ENCODE measurements at regions of chr17 and their contacts with region 1.

Region 1: DNA sequence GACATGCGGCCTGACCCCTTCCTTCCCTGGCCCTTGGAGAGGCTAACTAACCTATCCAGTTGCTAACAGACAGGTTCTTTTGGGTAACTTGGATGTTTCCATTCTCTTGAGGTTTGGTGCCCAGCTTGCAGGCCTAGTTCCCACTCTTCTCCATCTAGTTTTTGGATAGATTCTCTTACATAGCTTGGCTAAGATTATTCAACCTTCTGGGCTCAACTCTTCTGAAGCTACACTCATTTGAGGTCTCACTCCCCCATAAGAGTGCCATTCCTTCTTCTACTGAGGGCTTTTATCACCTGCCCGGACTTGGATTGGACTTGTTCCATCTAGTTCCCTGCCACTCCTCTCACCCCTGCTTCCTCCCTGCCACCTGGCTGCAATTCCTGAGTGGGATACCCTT is 44.1 kb upstream of the MARCHF10 start:
- DNase-seq: no peak
- H3K4me3 Mint-ChIP-seq: no peak overlapping the region
- H3K27ac Mint-ChIP-seq: no peak overlapping the region
- H3K4me1 Mint-ChIP-seq: no peaks in the 10 kb centered on the region
- H3K27me3 Mint-ChIP-seq: peaks cover 6% of the 10 kb centered on the region

Region 2: DNA sequence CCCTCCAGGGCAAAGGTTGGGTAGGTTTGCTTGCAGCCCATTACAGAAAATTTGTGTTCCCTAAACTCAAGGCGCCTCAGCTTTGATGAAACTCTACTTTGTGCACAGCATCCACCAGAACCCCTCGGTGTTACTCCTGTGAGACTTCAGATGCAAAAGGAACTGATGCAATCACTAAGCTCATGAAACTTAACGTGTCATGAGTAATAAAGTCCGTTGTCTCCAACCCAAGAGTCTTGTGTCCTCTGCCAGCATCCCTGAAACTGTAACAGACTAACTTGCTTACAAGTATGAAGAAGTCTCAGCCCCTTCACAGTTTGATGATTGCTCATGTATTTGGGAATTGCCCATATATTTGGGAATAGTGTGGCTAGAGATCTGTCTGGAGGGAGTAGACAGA is 30.7 kb after region 1 on chr17:
- CTCF ChIA-PET with region 1: no interaction called
- POLR2A ChIA-PET with region 1: interaction called, 11 read pairs
- DNase-seq: no peak
- H3K4me3 Mint-ChIP-seq: no peak overlapping the region
- H3K27ac Mint-ChIP-seq: no peak overlapping the region
- H3K4me1 Mint-ChIP-seq: no peaks in the 10 kb centered on the region
- H3K27me3 Mint-ChIP-seq: peaks cover 32% of the 10 kb centered on the region